ENCODE measurements at regions of chr15 and their contacts with region 1.

Region 1: GRCh38 chr15:75029378-75030022 is 6.1 kb downstream of the PPCDC start:
- DNase-seq: peak; percentile 95
- H3K4me3 ChIP-seq: peak overlapping the region; percentile 55
- H3K27ac ChIP-seq: peak overlapping the region; percentile 66
- H3K4me1 ChIP-seq: peaks cover 9% of the 10 kb centered on the region
- H3K27me3 ChIP-seq: no peaks in the 10 kb centered on the region

Region 2: DNA sequence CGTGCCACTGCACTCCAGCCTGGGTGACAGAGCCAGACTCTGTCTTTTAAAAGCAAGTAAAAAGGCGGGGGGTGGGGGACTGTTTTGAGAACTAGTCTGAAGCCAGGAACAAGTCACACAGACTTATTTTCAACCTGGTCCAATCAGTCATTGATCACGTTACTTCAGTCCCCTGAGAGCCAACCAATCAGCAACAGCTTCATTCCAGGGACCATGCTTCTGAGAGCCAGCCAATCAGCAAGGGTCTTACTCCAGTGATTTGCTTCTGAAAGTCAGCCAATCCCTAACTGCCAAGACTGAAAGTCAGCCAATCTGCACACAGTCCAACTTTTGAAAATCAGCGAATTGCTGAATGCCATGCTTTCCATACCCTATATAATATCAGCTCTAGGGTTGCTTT is 123.6 kb after region 1 on chr15:
- in situ Hi-C with region 1: no loop called
- DNase-seq: peak; percentile 39
- H3K4me3 ChIP-seq: no peak overlapping the region
- H3K27ac ChIP-seq: no peak overlapping the region
- H3K4me1 ChIP-seq: peaks cover 15% of the 10 kb centered on the region
- H3K27me3 ChIP-seq: no peaks in the 10 kb centered on the region

Region 3: GRCh38 chr15:75204340-75205063 is 175.0 kb after region 1 on chr15:
- in situ Hi-C with region 1: loop called (anchors 5 kb)
- DNase-seq: peak; percentile 96
- H3K4me3 ChIP-seq: peak overlapping the region; percentile 97
- H3K27ac ChIP-seq: peak overlapping the region; percentile 98
- H3K4me1 ChIP-seq: peaks cover 22% of the 10 kb centered on the region
- H3K27me3 ChIP-seq: no peaks in the 10 kb centered on the region